Posterior vena cava (tissue), 2 donors: ENCODE measurements at regions of chr9 and their contacts with region 1.

Region 1: GRCh38 chr9:130128733-130129431 is 43.3 kb upstream of the NCS1 start:
- DNase-seq: peak; percentile 94

Region 2: DNA sequence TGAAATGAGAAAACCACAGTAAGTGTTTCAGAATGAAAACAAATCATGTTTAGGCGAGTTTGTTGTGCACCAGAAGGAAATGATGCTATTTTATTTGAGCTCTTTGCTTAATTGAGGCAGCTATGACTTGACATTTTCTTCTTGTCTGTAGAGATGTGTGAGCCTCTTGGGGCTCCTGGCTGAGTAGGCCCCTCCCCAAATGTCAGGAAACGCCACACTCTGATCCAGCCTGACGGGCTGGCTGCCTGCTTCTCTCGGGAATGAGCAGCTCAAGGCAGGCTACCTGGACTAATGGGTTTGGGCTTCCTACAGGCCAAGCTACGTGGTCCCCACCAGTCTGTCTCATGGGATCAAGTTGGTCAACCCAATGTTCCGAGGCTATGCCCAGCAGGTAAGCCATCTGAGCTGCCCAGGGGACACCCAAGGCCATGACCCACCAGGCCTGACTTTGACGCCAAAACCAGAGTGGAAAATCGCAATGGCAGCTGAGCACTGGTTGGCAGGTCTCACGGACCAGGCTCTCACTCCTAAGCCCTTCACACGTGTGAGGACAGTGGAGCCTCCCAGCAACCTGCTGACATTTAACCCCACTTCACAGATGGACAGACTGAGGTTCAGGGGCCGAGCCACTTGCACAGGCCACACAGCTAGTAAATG is 263.8 kb before region 1 on chr9:
- intact Hi-C with region 1: no loop called
- DNase-seq: no peak

Region 3: GRCh38 chr9:129875181-129875611 is 253.7 kb before region 1 on chr9:
- intact Hi-C with region 1: no loop called
- DNase-seq: no peak

Region 4: DNA sequence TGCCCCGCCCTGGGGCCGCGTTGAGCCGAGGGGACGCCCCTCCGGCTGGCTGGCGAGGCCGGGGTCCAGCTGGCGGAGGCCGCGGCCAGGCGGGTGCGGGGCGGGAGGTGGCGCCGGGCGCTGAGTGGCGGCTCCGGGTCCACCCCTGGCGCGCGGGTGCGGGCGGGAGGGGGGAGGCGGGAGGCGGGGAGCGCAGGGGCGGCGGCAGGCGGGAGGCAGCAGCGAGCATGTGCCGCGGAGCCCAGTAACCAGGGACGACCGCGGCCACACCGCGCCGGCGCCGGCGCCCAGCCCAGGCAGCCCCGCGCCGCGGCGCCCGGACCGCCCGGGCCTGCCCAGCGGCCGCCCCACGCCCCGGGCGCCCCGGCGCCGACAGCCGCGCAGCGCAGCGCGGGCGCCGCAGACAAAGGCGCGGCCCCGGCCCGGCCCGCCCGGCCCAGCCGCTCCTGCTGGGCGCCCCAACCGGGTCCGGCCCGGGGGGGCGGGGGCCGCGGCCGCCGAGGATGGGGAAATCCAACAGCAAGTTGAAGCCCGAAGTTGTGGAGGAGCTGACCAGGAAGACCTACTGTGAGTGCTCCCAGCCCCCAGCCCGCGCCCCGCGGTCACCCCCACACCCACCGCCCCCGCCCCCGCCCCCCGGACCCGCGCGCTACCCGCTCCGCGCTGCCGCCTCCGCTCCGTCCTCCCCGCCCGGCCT is 43.4 kb after region 1 on chr9 and contains the start of gene NCS1:
- intact Hi-C with region 1: loop called in 1 of 2 experiments (anchors 5 kb)
- DNase-seq: peak; percentile 93
- total RNA-seq, gene NCS1: 194 to 196 TPM

Region 5: DNA sequence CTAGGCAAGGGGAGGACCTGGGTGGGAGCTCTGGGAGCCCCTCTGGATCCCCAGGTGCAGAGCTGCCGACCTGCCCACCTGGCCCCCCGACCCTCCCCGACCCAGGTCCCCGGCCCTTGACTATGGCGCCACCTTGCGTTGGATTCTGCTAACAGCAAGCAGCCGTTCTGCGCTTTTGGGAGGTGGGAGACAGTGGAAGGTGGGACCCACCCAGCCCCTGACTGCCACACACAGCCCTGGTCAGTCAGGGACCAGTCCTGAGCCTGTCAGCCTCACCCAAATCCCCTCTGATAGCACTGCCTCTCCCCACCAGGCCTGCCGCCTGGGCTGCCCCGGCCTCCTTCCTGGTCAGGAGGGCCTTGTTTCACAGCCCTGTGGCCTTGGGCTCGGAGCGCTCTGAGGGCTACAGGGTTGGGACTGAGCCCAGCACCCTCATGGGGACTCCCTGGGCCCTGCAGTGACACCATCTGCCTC is 214.6 kb after region 1 on chr9:
- intact Hi-C with region 1: loop called in 1 of 2 experiments (anchors 10 kb)
- DNase-seq: no peak